ENCODE measurements at regions of chr1 and their contacts with region 1.

Region 1: DNA sequence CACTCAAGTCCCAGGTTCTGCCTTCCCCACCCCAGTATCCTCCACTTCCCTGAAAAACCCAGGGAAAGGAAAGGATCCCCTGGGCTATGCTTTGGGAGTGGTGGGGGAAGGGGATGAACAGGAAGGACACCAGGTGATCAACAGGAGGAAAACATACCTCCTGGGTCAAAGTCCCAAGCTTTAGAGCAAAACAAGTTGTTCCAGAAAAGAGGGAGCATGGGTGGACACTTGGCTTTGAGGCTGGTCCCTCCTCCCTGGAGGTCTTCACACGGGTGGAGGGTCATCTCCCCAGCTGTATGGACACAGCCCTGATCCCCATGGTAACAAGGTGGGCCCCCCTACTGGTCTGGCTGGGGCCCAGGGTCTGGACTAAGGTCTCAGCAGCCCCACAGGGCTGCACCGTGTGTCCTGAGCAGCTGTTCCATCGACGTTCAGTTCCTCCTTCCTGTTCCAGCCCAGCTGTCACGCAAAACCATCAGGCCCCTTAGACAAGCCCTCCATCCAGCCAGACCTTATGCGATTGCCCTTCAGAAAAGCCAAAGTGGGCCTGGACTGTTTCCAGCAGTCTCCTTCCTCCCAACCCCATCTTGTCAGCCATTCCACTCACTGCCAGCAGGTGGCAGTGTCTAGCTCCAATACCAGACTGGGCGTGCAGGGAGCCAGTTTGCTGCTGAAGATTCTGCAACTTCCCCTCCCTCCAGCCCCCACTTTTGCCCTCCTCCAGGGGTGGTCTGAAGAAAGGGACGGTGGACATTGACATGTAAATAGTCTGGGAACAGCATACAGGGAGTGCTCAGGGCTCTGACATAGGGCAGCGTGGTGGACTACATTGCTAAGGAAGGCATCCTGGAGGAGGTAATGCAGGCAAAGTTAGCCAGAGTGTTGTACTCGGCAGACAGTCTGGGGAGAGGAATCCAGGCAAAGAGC is 2.9 kb upstream of the PDZK1IP1 start:
- DNase-seq: peak; percentile 77 to 88
- ATAC-seq: peak; percentile 36 to 49 (median 40)
- H3K4me3 ChIP-seq: no peak overlapping the region
- H3K27ac ChIP-seq: no peak overlapping the region
- H3K4me1 ChIP-seq: peaks cover 15% of the 10 kb centered on the region
- H3K27me3 ChIP-seq: peaks cover 0 to 3% (median 0%) of the 10 kb centered on the region in 3 donors
- CTCF ChIP-seq: peak; percentile 94

Region 2: GRCh38 chr1:47262787-47263413 is 70.2 kb after region 1 on chr1:
- intact Hi-C with region 1: loop called (anchors 5 kb)
- DNase-seq: no peak
- ATAC-seq: peak in 2 of 4 donors; percentile 44 to 51
- H3K4me3 ChIP-seq: no peak overlapping the region
- H3K27ac ChIP-seq: no peak overlapping the region
- H3K4me1 ChIP-seq: no peaks in the 10 kb centered on the region
- H3K27me3 ChIP-seq: no peaks in the 10 kb centered on the region
- CTCF ChIP-seq: peak; percentile 53

Region 3: DNA sequence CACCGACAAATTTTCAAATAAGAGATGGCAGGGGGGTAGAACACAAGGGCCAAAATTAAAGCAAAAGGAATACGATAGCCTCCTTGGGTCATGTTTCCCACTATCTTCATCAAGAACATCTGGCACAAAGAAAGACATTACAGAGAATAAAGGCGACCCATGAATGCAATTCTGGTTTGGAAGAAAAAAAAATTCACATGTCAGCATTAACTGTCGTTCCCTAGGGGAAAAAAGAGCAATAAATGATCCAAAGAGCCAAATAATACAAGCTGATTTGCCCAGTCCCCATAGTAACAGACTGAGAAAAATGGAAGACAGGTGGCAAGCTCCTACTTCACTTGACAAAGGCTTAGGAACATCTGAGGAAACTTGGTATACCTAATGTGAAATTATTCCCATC is 116.7 kb after region 1 on chr1:
- intact Hi-C with region 1: no loop called
- DNase-seq: no peak
- ATAC-seq: no peak
- H3K4me3 ChIP-seq: no peak overlapping the region
- H3K27ac ChIP-seq: no peak overlapping the region
- H3K4me1 ChIP-seq: no peaks in the 10 kb centered on the region
- H3K27me3 ChIP-seq: no peaks in the 10 kb centered on the region
- CTCF ChIP-seq: no peak

Region 4: GRCh38 chr1:47333922-47334764 is 141.4 kb after region 1 on chr1:
- intact Hi-C with region 1: loop called in 1 of 2 experiments (anchors 5 kb)
- DNase-seq: peak; percentile 86 to 92
- ATAC-seq: peak; percentile 93 to 95 (median 94)
- H3K4me3 ChIP-seq: peak overlapping the region; percentile 88
- H3K27ac ChIP-seq: peak overlapping the region; percentile 97
- H3K4me1 ChIP-seq: peaks cover 32% of the 10 kb centered on the region
- H3K27me3 ChIP-seq: no peaks in the 10 kb centered on the region
- CTCF ChIP-seq: peak; percentile 5

Region 5: DNA sequence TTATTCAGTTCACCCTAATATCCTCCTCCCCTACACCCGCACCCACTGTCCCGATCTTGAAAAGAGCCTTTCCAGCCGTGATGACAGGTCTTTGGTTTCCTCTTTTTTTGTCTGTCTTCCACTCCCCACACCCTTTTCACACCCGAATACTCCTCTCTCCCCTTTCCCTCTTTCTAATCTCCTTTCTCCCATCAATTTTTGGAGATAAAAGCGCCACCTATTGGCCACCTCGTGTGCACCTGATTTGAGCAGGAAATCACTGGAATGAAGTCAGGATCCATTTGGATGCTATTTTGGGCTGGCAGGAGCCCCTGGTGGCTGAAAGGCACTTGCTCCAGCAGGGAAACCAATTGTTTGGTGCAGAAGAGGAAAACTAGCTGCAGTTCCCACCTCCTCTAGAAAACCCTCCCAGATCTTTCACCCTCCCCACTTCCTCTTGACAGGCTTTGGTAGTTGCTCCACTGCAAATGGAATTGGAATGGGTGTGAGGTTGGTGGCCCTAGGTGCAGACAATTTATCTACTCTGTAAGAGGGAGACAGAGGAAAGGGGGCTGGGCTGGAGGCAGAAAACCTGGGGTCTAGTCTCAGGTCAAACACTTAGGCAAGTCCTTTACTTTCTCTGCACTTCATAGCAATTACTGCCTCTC is 231.7 kb after region 1 on chr1:
- intact Hi-C with region 1: loop called (anchors 5 kb)
- DNase-seq: no peak
- ATAC-seq: peak in 1 of 4 donors; percentile 37
- H3K4me3 ChIP-seq: no peak overlapping the region
- H3K27ac ChIP-seq: no peak overlapping the region
- H3K4me1 ChIP-seq: no peaks in the 10 kb centered on the region
- H3K27me3 ChIP-seq: peaks cover 0 to 18% (median 5%) of the 10 kb centered on the region in 3 donors
- CTCF ChIP-seq: peak; percentile 49

Region 6: DNA sequence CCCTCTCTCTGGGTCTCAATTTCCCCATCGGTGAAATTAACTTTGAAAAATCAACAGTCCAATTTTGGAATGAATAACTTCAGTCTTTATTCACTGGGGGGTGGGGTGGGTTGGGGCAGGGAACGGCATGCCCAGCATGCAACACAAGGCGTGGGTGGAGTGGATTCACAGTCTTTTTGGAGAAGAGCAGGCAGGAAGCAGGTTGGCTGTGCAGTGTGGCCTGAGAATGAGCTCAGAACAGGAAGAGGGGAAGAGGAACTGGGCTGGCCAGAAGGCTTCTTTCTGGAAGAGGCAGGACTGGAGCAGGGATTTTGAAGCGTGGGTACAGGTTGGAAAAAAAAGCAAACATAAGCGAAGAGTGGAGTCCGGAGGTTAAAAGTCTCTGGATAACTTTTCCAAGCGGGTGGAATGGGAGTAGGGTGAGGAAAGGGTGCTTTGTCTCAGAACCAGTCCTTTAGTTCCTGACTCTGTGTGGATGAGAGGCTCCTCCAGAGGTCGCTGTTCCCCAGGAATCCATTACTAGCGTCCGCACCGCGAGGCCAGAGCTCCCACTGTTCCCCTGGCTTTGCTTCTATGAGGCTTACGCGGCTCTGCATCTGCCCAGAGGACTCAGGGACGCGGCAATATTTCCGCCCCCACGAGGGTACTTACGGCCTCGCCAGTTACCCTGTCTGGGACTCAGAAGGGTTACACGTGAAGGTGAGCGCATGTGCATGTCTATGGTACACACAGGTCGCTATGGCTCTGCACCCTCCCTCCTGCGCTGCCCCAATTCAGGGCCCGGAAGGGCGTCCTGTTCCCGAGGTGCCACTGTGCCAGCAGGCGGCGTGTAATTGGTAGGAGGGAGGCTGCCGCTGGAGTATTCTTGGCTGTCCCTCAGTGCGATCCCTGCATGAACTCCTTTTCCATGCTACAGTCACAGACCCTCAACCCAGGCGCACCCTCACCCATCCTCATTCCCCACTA is 239.6 kb after region 1 on chr1:
- intact Hi-C with region 1: loop called in 1 of 2 experiments (anchors 5 kb)
- DNase-seq: peak; percentile 69 to 81
- ATAC-seq: peak; percentile 49 to 71 (median 58)
- H3K4me3 ChIP-seq: no peak overlapping the region
- H3K27ac ChIP-seq: no peak overlapping the region
- H3K4me1 ChIP-seq: no peaks in the 10 kb centered on the region
- H3K27me3 ChIP-seq: peaks cover 0 to 78% (median 33%) of the 10 kb centered on the region in 3 donors
- CTCF ChIP-seq: peak; percentile 57

Region 7: DNA sequence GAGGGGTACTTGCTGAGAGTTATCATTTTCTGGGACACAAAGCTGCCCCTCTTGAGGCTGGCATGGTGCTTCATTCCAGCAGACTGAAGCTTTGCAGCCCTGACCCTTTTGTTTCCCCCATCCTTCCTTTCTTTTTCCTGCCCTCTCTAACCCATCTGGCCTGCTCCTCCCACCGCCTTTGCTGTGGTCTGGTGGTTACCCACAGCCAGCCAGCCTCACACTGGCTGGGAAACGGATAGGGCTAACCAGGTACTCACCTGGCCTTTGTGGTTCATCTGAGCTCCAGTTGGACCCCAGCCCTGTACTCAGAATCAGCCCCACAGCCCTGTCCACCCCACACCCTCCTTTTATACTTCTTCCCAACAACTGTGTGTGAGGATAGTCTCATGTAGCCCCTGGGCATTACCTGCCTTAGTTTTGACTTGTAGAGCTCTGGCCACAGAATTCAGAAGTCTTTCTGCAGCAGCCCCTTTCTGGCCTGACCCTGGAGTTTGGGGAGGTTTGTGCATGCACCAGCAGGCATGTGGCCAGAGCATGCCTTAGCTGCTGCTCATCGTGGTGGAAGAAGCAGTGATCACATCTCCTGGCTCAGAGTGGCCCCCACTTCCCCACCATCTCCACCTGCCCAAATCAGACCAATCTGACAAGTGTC is 666.5 kb after region 1 on chr1:
- intact Hi-C with region 1: no loop called
- DNase-seq: no peak
- ATAC-seq: no peak
- H3K4me3 ChIP-seq: no peak overlapping the region
- H3K27ac ChIP-seq: no peak overlapping the region
- H3K4me1 ChIP-seq: no peaks in the 10 kb centered on the region
- H3K27me3 ChIP-seq: no peaks in the 10 kb centered on the region
- CTCF ChIP-seq: no peak

Measured in psoas muscle (tissue), 8 donors.